MCF 10A (cell line): ENCODE measurements at regions of chr6 and their contacts with region 1.

Region 1: DNA sequence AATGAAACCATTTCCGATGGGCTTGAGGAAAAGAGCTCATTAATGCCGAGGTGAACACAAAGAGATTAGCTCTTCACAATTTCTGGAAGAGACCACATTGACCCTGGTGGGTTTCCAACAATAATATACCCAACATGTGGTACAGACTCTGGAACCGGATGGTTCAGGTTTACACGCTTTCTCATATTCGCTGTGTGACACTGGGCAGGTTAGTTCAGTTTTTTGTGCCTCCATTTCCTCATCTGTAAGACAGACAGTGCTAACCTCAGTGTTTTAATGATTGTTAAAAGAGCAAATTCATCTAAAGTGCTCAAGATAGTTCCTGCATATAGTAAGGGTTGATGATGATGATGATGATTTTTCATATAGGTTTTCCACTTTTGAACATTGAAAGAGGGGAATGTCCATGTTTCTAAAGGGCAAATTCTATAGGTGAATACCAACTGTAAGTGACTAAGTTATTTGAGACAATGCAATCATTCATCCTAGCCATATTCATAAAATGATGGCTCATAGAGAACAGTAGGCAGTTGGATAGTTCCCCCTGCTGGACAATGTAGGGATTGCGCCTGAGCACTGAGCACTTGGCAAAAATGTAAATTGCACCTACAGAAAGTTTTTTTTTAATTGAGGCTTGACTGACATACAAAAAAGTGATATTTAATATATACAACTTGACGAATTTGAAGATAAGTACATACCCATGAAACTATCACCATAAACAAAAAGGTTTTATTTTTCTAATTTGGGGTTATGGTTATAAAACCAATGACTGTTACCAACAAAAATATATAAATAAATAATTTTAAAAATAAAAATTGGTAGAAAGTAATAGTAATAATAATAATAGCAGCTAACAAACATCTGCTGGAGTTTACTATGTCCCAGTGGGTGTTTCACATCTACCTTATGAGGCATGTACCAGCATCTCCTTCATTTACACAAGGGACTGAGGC is 2.1 kb upstream of the PERP start:
- DNase-seq: peak; percentile 78
- H3K4me3 Mint-ChIP-seq: no peak overlapping the region
- H3K27ac Mint-ChIP-seq: peak overlapping the region; percentile 50
- H3K4me1 Mint-ChIP-seq: peaks cover 14% of the 10 kb centered on the region
- H3K27me3 Mint-ChIP-seq: peaks cover 2% of the 10 kb centered on the region
- CTCF ChIP-seq: peak; percentile 80

Region 2: DNA sequence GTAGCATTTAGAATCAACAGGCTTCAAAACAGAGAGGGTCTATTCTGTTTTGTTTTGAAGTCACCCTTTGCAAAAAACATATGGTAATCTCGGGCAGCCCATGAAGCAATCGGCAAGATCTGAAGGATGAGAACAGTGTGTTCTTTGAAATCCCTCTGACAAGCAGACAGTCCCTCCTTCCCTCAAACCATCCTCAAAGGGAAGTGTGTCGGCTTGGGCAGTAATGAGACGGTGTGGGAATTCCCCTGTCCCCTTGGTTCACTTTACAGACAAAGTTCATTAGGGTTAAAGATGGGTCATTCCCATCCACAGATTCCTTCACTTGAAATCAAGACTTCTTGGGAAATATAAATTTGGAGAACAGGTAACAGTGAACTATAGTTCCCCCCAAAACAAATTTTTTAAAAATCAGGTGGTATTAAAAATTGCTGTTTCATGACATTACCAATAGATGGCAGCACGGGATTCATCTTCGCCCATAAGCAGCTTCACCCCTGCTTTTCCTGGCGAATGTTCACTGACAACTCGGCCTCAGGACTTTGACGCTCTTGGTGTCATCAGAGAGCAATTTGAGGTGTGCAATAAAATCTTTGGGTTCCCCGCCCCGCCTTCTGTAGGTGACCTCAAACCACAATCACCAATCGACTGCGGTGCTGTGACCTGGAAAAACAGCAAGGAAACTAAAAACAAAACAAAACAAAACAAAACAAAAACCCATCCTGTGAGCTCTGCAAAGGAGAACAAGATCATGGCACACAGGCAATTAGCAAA is 401.5 kb before region 1 on chr6:
- CTCF ChIA-PET with region 1: no interaction called
- POLR2A ChIA-PET with region 1: interaction called, 3 read pairs
- intact Hi-C with region 1: loop called (anchors 1 kb)
- DNase-seq: peak; percentile 88
- H3K4me3 Mint-ChIP-seq: peak overlapping the region; percentile 60
- H3K27ac Mint-ChIP-seq: peak overlapping the region; percentile 67
- H3K4me1 Mint-ChIP-seq: peaks cover 14% of the 10 kb centered on the region
- H3K27me3 Mint-ChIP-seq: no peaks in the 10 kb centered on the region
- CTCF ChIP-seq: peak; percentile 64

Region 3: DNA sequence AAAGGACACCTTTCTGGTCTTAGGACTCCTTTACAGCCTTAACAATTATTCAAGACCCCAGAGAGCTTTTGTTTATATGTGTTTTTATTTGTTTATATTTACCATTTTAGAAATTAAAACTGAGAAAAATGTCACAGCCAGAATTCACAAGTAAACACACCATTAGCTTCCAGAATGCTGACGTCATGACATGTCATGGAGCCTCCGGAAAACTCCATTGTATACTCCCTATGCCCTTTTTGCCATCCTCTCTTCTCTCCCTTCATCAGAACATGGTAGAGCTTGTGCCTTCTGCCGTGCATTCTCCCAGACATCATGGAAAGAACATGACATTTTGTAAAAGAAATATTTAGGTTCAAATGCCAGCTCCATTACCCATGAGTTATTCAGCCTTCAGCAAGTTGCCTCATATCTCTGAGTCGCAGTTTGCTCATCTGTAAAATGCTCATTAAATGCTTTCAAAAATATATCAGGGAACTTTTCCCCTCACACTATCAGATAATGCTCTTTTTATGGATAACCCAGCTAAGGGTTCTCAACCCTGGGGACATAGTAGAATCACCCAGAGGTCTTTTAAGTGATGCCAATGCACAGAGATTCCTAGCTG is 214.4 kb before region 1 on chr6:
- CTCF ChIA-PET with region 1: no interaction called
- POLR2A ChIA-PET with region 1: no interaction called
- intact Hi-C with region 1: no loop called
- DNase-seq: no peak
- H3K4me3 Mint-ChIP-seq: no peak overlapping the region
- H3K27ac Mint-ChIP-seq: no peak overlapping the region
- H3K4me1 Mint-ChIP-seq: peaks cover 7% of the 10 kb centered on the region
- H3K27me3 Mint-ChIP-seq: no peaks in the 10 kb centered on the region
- CTCF ChIP-seq: no peak

Region 4: GRCh38 chr6:138001750-138002349 is 107.5 kb before region 1 on chr6:
- CTCF ChIA-PET with region 1: interaction called, 127 read pairs
- POLR2A ChIA-PET with region 1: interaction called, 386 read pairs
- intact Hi-C with region 1: loop called (anchors 1 kb)
- DNase-seq: peak; percentile 65
- H3K4me3 Mint-ChIP-seq: no peak overlapping the region
- H3K27ac Mint-ChIP-seq: no peak overlapping the region
- H3K4me1 Mint-ChIP-seq: peaks cover 10% of the 10 kb centered on the region
- H3K27me3 Mint-ChIP-seq: no peaks in the 10 kb centered on the region
- CTCF ChIP-seq: peak; percentile 83

Region 5: DNA sequence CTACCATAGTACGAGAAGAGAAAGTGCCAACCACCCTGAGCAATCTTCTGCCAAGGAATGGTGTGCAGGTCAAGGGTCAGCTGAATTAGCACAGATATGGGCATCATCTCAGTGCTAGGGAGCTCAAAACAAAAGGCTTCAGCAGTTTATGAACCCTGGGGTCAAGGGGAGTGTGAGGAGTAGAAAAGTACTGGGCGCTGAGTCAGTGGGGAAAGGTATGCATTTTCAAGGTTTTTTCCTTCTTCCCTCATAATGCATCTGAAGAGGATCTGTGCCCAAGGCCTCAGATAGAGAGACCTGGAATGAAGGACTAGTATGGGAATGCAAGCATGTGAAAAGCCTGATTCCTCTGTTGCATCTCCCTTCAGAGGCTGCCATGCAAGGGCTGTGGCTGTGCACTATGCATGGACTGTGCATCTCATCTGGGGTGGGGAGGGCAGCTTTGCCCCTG is 83.8 kb before region 1 on chr6:
- CTCF ChIA-PET with region 1: interaction called, 26 read pairs
- POLR2A ChIA-PET with region 1: interaction called, 717 read pairs
- intact Hi-C with region 1: loop called (anchors 2 kb)
- DNase-seq: no peak
- H3K4me3 Mint-ChIP-seq: no peak overlapping the region
- H3K27ac Mint-ChIP-seq: no peak overlapping the region
- H3K4me1 Mint-ChIP-seq: peaks cover 15% of the 10 kb centered on the region
- H3K27me3 Mint-ChIP-seq: no peaks in the 10 kb centered on the region
- CTCF ChIP-seq: no peak

Region 6: DNA sequence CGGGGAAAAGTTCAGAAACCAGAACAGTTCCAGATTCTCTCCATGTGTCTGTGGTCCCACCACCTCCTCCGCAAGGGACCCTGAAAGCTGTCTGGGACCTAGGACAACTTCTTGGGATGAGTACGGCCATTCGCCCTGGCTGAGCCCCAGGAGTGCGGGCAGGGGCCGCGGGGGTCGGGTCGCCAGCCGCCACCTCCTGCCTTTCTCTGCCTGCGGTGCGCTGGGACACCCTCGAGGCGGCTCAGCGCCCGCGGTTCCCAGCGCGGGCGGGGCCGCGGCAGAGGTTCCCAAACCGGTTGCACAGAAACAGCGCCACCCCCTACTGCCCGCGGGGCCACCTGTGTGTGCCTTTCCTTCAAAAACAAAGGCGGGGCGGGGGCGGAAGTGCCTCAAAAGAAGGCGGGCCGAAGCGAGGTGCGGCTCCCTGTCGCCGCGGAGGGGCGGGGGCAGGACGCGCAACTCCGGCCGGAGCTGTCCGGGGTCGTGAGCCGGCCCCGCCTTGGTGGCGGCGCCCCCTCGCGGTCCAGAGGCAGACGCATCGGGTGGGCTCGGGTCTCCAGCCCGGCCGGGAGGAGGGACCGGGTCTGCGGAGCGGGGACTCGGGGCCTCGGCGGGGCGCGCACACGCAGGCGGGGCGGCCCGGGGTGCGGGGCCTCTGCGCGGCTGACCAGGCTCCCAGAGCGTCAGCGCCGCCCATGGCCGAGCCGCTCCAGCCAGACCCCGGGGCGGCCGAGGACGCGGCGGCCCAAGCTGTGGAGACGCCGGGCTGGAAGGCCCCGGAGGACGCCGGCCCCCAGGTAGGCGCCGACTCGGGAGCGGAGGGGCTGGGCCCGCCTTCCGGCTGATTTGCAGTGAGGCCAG is 294.7 kb after region 1 on chr6 and contains the start of gene HEBP2:
- CTCF ChIA-PET with region 1: interaction called, 5 read pairs
- POLR2A ChIA-PET with region 1: interaction called, 21 read pairs
- intact Hi-C with region 1: no loop called
- DNase-seq: peak; percentile 96
- H3K4me3 Mint-ChIP-seq: peak within 1 kb of the TSS; percentile 80
- H3K27ac Mint-ChIP-seq: peak within 1 kb of the TSS; percentile 77
- H3K4me1 Mint-ChIP-seq: peaks cover 11% of the 10 kb centered on the region
- H3K27me3 Mint-ChIP-seq: no peaks in the 10 kb centered on the region
- CTCF ChIP-seq: peak; percentile 12
- total RNA-seq, gene HEBP2: 71.2 and 89.7 TPM in 2 replicates

Region 7: GRCh38 chr6:138647006-138647405 is 537.7 kb after region 1 on chr6:
- CTCF ChIA-PET with region 1: no interaction called
- POLR2A ChIA-PET with region 1: interaction called, 10 read pairs
- intact Hi-C with region 1: no loop called
- DNase-seq: peak; percentile 81
- H3K4me3 Mint-ChIP-seq: peak overlapping the region; percentile 72
- H3K27ac Mint-ChIP-seq: peak overlapping the region; percentile 87
- H3K4me1 Mint-ChIP-seq: peaks cover 7% of the 10 kb centered on the region
- H3K27me3 Mint-ChIP-seq: no peaks in the 10 kb centered on the region
- CTCF ChIP-seq: no peak